Activated T-helper 2 cell treated with anti-CD3 and anti-CD28 coated beads, Interferon-gamma antibody, Interleukin-2, Interleukin-4, amounts not matched to agents 10 μg/mL and 5 μg/mL and 100 μg/mL, durations not matched to agents 14 hours and 24 hours and 36 hours (primary cell): ENCODE measurements at regions of chr5 and their contacts with region 1.

Region 1: GRCh38 chr5:149618581-149619251 is 37.4 kb downstream of the ARHGEF37 start:
- DNase-seq: no peak
- H3K4me3 Mint-ChIP-seq: no peak overlapping the region
- H3K27ac Mint-ChIP-seq: no peak overlapping the region
- H3K4me1 Mint-ChIP-seq: peaks cover 17% of the 10 kb centered on the region
- H3K27me3 Mint-ChIP-seq: peaks cover 2% of the 10 kb centered on the region

Region 2: DNA sequence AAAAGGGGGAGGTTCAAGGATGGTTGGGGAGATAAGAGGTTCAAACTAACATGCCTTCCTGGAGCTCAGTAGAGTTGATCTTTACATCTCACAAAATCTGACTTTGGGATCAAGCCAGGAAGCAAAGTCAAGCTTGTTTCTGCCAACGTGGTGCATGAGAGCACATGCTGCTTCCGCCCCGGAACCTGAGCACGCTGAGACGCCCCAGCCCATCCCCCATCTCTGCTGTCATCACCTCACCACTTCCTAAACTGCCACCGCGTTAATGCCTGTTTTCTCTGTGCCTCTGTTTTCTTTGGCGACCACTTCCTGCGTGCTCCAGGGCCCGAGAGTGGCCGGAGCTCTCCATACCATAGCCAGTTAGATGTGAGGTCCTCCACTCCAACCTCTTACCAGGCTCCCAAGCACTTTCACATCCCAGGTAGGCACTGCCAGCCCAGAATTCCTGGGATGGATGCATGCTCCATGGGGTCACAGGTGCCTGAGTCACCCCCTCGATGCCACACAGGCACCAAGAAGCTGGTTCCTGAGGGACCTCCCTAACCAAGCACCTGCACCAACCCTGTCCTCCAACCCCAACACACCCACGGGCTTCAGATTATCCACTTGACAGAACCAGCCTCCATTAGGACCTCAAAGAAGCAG is 378.2 kb before region 1 on chr5:
- intact Hi-C with region 1: no loop called
- DNase-seq: peak; percentile 77
- H3K4me3 Mint-ChIP-seq: no peak overlapping the region
- H3K27ac Mint-ChIP-seq: peak overlapping the region; percentile 79
- H3K4me1 Mint-ChIP-seq: peaks cover 15% of the 10 kb centered on the region
- H3K27me3 Mint-ChIP-seq: peaks cover 20% of the 10 kb centered on the region

Region 3: GRCh38 chr5:149442563-149443182 is 176.0 kb before region 1 on chr5:
- intact Hi-C with region 1: loop called (anchors 5 kb)
- DNase-seq: peak; percentile 52
- H3K4me3 Mint-ChIP-seq: no peak overlapping the region
- H3K27ac Mint-ChIP-seq: no peak overlapping the region
- H3K4me1 Mint-ChIP-seq: peaks cover 24% of the 10 kb centered on the region
- H3K27me3 Mint-ChIP-seq: no peaks in the 10 kb centered on the region

Region 4: DNA sequence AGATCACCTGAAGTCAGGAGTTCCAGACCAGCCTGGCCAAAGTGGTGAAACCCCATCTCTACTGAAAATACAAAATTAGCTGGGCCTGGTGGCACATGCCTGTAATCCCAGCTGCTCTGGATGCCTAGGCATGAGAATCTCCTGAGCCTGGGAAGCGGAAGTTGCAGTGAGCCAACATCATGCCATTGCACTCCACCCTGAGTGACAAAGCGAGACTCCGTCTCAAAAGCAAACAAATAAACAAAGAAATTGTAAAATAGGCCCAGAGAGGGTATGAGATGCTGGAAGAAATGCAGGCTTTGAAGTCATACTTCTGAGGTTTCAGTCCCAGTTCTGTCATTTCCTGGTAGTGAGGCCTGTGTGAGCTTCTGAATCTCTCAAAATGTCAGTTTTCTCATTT is 42.7 kb before region 1 on chr5:
- intact Hi-C with region 1: loop called (anchors 1 kb)
- DNase-seq: no peak
- H3K4me3 Mint-ChIP-seq: no peak overlapping the region
- H3K27ac Mint-ChIP-seq: peak overlapping the region; percentile 91
- H3K4me1 Mint-ChIP-seq: peaks cover 20% of the 10 kb centered on the region
- H3K27me3 Mint-ChIP-seq: no peaks in the 10 kb centered on the region

Region 5: GRCh38 chr5:149632311-149633251 is 13.9 kb after region 1 on chr5:
- intact Hi-C with region 1: no loop called
- DNase-seq: no peak
- H3K4me3 Mint-ChIP-seq: peak overlapping the region; percentile 14
- H3K27ac Mint-ChIP-seq: peak overlapping the region; percentile 56
- H3K4me1 Mint-ChIP-seq: peaks cover 18% of the 10 kb centered on the region
- H3K27me3 Mint-ChIP-seq: no peaks in the 10 kb centered on the region